ENCODE measurements at regions of chr7 and their contacts with region 1.

Region 1: GRCh38 chr7:156969972-156970420 is 20.5 kb downstream of the NOM1 start:
- DNase-seq: peak in 1 of 2 experiments; percentile 45
- H3K4me3 ChIP-seq: no peak overlapping the region
- H3K27ac ChIP-seq: no peak overlapping the region
- H3K4me1 ChIP-seq: no peaks in the 10 kb centered on the region
- H3K27me3 ChIP-seq: no peaks in the 10 kb centered on the region
- CTCF ChIP-seq: peak; percentile 80

Region 2: GRCh38 chr7:157138424-157139110 is 168.6 kb after region 1 on chr7 and contains the start of gene UBE3C:
- CTCF ChIA-PET with region 1: no interaction called
- POLR2A ChIA-PET with region 1: no interaction called
- intact Hi-C with region 1: loop called (anchors 5 kb)
- DNase-seq: peak; percentile 80 to 93
- H3K4me3 ChIP-seq: peak within 1 kb of the TSS; percentile 76
- H3K27ac ChIP-seq: peak within 1 kb of the TSS; percentile 88
- H3K4me1 ChIP-seq: peaks cover 31% of the 10 kb centered on the region
- H3K27me3 ChIP-seq: no peaks in the 10 kb centered on the region
- CTCF ChIP-seq: no peak
- total RNA-seq, gene UBE3C: 71.0 and 77.6 TPM in 2 replicates

Region 3: DNA sequence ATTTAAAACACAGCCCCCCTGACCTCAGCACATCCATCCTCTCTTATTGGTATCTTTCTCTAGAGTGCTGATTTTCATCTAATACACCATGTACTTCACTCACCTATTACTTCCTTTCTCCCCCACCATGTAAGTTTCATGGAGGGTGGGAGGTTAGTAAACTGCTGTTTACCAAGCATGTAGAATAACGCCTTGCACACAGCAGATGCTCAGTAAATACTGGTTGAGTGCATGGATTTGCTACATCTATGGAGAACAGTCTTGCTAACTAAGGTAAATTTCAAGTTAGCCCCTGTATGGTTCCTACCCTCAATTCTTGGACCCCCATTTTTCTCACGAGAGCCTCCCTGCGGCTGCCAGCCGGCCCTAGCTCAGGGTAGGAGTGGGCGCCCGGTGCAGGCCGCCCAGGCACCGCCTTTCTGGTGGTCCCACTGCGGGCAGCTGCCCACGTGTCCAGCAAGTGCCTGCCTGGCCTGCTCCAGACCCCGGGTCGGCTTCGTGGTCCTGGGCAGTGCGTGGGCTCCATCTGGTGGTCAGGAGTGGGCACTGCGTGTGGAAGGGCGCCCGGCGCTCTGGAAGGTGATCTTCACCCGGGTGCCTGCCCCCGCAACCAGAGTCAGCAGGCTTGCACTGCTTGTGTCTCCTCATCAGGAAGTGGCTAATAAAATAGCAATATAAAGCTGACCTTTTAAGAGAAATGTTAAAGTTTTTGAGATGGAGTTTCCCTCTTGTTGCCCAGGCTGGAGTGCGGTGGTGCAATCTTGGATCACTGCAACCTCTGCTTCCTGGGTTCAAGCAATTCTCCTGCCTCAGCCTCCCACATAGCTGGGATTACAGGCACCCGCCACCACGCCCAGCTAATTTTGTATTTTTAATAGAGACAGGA is 303.5 kb after region 1 on chr7:
- CTCF ChIA-PET with region 1: no interaction called
- POLR2A ChIA-PET with region 1: no interaction called
- intact Hi-C with region 1: loop called (anchors 1 kb)
- DNase-seq: peak; percentile 59 to 71
- H3K4me3 ChIP-seq: no peak overlapping the region
- H3K27ac ChIP-seq: no peak overlapping the region
- H3K4me1 ChIP-seq: no peaks in the 10 kb centered on the region
- H3K27me3 ChIP-seq: no peaks in the 10 kb centered on the region
- CTCF ChIP-seq: peak; percentile 97

Region 4: GRCh38 chr7:157386979-157387800 is 417.2 kb after region 1 on chr7:
- CTCF ChIA-PET with region 1: no interaction called
- POLR2A ChIA-PET with region 1: no interaction called
- intact Hi-C with region 1: loop called (anchors 5 kb)
- DNase-seq: peak; percentile 55 to 73
- H3K4me3 ChIP-seq: no peak overlapping the region
- H3K27ac ChIP-seq: no peak overlapping the region
- H3K4me1 ChIP-seq: no peaks in the 10 kb centered on the region
- H3K27me3 ChIP-seq: no peaks in the 10 kb centered on the region
- CTCF ChIP-seq: peak; percentile 98

Region 5: GRCh38 chr7:158353606-158354570 is 1383.9 kb after region 1 on chr7:
- CTCF ChIA-PET with region 1: no interaction called
- POLR2A ChIA-PET with region 1: no interaction called
- intact Hi-C with region 1: loop called (anchors 5 kb)
- DNase-seq: peak; percentile 29 to 55
- H3K4me3 ChIP-seq: no peak overlapping the region
- H3K27ac ChIP-seq: no peak overlapping the region
- H3K4me1 ChIP-seq: no peaks in the 10 kb centered on the region
- H3K27me3 ChIP-seq: peaks cover 81% of the 10 kb centered on the region
- CTCF ChIP-seq: peak; percentile 88

Measured in PC-9 (cell line).